A549 (cell line): ENCODE measurements at regions of chr17 and their contacts with region 1.

Region 1: DNA sequence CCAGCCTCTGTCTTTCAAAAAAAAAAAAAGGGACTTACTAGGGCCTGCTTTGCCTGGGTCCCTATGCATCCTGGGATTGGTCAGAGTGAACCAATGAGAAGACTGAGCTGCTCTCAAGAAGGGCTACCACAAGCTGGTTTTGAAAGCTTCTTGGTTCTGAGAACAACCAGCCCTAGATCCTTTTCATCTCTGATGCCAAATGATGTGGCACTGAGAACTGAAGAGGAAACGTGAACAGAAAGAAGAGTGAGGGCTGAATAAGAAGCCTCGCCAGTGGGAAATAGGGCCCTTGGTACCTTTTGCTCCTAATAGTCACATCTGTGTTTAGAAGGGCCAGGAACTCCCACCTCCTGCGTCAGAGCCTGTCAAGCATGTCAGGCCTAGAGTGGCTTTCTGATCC is 10.7 kb downstream of the TACO1 start:
- DNase-seq: no peak
- ATAC-seq: peak in 1 of 2 experiments; percentile 29; a peak in 1 of 6 replicates
- H3K4me3 ChIP-seq: no peak overlapping the region
- H3K27ac ChIP-seq: no peak overlapping the region
- H3K4me1 ChIP-seq: no peaks in the 10 kb centered on the region
- CTCF ChIP-seq: no peak
- EP300 ChIP-seq: no peak
- POLR2A ChIP-seq: no peak
- RAD21 ChIP-seq: no peak

Region 2: DNA sequence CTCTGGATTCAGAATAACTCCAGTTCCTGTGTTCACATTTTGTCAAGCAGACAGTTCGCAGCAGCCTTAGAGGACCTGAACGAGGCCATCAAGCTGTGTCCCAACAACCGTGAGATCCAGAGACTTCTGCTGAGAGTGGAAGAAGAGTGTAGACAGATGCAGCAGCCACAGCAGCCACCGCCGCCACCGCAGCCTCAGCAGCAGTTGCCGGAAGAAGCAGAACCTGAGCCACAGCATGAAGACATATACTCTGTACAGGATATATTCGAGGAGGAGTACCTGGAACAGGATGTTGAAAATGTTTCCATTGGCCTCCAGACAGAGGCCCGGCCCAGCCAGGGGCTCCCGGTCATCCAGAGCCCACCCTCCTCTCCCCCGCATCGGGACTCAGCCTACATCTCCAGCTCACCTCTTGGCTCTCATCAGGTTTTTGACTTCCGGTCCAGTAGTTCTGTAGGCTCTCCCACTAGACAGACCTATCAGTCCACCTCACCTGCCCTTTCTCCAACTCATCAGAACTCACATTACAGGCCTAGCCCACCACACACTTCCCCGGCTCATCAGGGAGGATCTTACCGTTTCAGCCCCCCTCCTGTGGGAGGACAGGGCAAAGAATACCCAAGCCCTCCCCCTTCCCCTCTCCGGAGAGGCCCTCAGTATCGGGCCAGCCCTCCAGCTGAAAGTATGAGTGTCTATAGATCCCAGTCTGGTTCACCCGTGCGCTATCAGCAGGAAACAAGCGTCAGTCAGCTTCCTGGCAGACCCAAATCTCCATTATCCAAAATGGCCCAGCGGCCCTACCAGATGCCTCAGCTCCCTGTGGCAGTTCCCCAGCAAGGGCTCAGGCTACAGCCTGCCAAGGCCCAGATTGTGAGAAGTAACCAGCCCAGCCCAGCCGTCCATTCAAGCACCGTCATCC is 191.1 kb before region 1 on chr17:
- CTCF ChIA-PET with region 1: interaction called, 336 read pairs
- POLR2A ChIA-PET with region 1: interaction called, 4 read pairs
- DNase-seq: no peak
- ATAC-seq: no peak
- H3K4me3 ChIP-seq: no peak overlapping the region
- H3K27ac ChIP-seq: no peak overlapping the region
- H3K4me1 ChIP-seq: no peaks in the 10 kb centered on the region
- CTCF ChIP-seq: no peak
- EP300 ChIP-seq: no peak
- POLR2A ChIP-seq: no peak
- RAD21 ChIP-seq: no peak

Region 3: DNA sequence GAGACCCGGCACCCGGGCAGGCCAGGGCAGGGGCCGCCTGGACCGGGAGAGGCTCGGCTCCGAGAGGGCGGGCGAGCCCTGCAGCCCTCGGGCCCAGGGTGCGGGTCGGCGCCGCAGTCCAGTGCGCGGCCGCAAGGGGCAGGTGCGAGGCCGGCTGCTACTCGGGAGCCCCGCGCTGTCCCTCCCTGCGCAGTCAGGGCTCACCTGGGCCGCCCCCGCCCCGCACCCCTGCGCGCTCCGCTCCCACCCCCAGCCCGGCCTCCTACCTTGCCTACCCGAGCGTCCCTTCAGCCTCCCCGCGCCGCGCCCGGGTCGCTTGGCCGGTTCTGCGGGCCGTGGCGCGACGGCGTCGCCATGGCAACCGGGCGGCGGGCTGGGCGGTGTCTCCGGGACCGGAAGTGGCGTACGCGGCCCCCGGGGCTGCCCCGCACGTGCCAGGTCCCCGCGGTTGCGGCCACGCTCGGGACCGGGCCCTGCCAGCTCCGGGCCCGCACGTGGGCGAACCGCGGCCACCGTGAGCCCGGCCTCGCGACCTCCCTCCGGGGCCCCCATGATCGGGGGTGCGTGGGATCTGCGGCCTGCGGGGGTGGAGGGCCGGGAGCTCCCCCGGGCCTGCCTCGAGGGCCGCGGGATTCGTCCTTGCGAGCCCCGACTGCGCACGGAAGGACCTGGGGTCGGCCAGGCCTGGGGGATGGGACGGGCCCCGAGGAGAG is 165.2 kb before region 1 on chr17 and contains the start of gene CYB561:
- CTCF ChIA-PET with region 1: interaction called, 18 read pairs
- POLR2A ChIA-PET with region 1: interaction called, 4 read pairs
- DNase-seq: peak; percentile 81 to 92
- ATAC-seq: peak; percentile 88 to 94
- H3K4me3 ChIP-seq: peak within 1 kb of the TSS; percentile 69
- H3K27ac ChIP-seq: peak within 1 kb of the TSS; percentile 94 to 98
- H3K4me1 ChIP-seq: peaks cover 15% of the 10 kb centered on the region
- CTCF ChIP-seq: peak; percentile 61
- EP300 ChIP-seq: no peak
- POLR2A ChIP-seq: peak; percentile 47
- RAD21 ChIP-seq: peak in 1 of 2 experiments; percentile 44; a peak in 3 of 5 replicates
- polyA plus RNA-seq, gene CYB561: 16.6 and 19.7 TPM in 2 replicates

Region 4: GRCh38 chr17:63478791-63479494 is 132.4 kb before region 1 on chr17:
- CTCF ChIA-PET with region 1: interaction called, 18 read pairs
- POLR2A ChIA-PET with region 1: no interaction called
- DNase-seq: peak; percentile 92 to 99
- ATAC-seq: peak; percentile 84 to 95
- H3K4me3 ChIP-seq: no peak overlapping the region
- H3K27ac ChIP-seq: peak overlapping the region in 1 of 2 experiments; percentile 57; a peak in 3 of 6 replicates
- H3K4me1 ChIP-seq: peaks cover 13% of the 10 kb centered on the region
- CTCF ChIP-seq: peak; percentile 90
- EP300 ChIP-seq: no peak
- POLR2A ChIP-seq: no peak
- RAD21 ChIP-seq: peak; percentile 84 to 88

Region 5: DNA sequence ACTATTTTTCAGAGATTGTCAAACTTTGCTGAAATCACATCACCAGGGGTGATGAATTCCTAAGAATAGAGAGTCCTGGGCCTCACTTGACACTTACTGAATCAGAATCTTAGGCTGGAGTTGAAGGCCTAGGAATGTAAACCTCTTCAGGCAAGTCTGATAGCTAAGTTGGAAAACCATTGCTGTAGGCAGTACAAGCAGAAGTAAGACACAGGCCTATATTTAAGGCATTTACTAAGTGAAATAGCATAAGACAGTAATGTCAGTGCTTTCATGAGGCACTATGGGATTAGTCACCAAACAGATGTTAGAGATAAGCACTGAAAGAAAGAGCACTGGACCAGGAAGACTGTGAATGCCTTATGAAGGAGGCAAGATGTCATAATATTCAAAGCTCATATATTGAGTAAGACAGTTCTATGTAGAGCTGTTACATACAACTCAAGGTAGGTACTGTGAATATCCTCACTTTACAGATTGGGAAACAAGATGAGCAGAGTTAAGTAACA is 39.5 kb before region 1 on chr17:
- CTCF ChIA-PET with region 1: interaction called, 16 read pairs
- POLR2A ChIA-PET with region 1: no interaction called
- DNase-seq: peak in 1 of 2 experiments; percentile 21
- ATAC-seq: peak; percentile 27 to 51; a peak in 2 of 6 replicates
- H3K4me3 ChIP-seq: no peak overlapping the region
- H3K27ac ChIP-seq: no peak overlapping the region
- H3K4me1 ChIP-seq: peaks cover 8% of the 10 kb centered on the region; the same call in 1 of the 3 replicates
- CTCF ChIP-seq: no peak
- EP300 ChIP-seq: no peak
- POLR2A ChIP-seq: no peak
- RAD21 ChIP-seq: no peak

Region 6: DNA sequence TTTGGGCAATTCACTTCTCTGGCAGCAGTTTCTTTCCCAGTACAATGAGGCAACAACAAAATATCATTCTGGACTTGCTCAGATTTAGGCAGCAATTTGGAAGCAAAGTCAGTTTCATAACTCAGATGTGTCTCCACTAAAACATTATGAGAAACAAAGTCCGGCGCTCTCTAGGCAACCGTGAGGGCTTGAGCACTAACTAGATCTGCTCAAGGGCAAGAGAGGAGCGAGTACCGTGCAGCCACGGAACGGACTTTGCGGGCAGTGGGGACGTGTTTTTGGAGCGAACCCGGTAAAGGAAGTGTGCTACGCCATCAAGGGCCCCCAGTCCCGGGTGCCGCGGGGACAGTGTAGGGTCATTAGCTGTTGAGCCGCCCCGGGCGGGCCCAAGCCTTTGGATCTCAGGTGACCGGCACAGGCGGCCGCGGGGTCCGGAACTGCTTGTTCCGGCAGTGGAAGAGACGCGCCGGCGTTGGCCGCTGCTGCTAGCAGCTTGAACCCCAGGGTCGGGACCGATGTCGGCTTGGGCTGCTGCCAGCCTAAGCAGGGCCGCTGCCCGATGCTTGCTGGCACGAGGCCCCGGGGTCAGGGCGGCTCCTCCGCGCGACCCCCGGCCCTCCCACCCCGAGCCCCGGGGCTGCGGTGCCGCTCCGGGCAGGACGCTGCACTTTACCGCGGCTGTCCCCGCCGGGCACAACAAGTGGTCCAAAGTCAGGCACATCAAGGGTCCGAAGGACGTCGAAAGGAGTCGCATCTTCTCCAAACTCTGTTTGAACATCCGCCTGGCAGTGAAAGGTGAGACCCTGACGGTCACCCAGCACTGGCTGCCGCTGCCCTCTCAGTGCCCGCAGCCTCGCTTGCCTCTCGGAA is 10.6 kb before region 1 on chr17 and contains the start of gene TACO1:
- CTCF ChIA-PET with region 1: interaction called, 80 read pairs
- POLR2A ChIA-PET with region 1: interaction called, 4 read pairs
- DNase-seq: peak; percentile 90 to 91
- ATAC-seq: peak; percentile 94 to 95
- H3K4me3 ChIP-seq: peak within 1 kb of the TSS; percentile 88
- H3K27ac ChIP-seq: peak within 1 kb of the TSS; percentile 90 to 95
- H3K4me1 ChIP-seq: peaks cover 13% of the 10 kb centered on the region
- CTCF ChIP-seq: no peak
- EP300 ChIP-seq: no peak
- POLR2A ChIP-seq: peak; percentile 75
- RAD21 ChIP-seq: 0 out of 5 replicates have a peak, but pooled peaks of 1 of the 2 experiments have one; percentile 17
- polyA plus RNA-seq, gene TACO1: 38.0 and 49.9 TPM in 2 replicates

Region 7: DNA sequence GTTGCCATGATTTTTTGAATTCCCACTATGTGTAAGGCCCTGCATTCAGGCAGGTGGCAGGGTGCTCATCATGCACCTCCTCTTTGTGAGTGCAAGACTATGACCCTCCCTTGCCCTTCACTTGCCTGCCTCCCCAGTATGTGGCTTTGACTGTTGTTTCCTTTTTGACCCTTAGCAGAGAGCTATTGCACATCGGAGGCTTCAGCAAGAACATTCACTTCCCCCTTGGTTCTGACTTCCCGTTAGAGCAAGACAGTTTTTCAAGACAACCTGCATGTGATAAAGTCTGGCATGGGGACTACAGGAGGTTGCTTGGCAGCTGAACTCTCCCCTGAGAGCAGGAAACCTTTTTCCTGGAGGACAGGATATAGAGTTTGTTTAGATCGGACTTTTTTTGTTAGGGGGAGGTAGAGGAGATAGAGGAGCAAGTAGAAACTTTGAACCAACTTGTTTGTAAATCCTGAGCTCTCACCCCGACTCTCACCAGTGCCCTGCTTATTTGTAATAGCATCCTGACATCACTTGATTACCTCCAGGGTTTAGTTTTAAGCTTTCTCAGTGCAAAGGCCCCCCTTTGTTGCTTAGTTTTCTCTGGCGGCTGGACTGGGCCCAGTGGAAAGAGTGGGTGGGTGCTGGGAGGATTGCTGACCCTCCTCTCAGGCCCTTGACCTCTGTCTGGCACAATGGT is 54.3 kb after region 1 on chr17:
- CTCF ChIA-PET with region 1: interaction called, 12 read pairs
- POLR2A ChIA-PET with region 1: no interaction called
- DNase-seq: no peak
- ATAC-seq: no peak
- H3K4me3 ChIP-seq: no peak overlapping the region
- H3K27ac ChIP-seq: no peak overlapping the region
- H3K4me1 ChIP-seq: no peaks in the 10 kb centered on the region
- CTCF ChIP-seq: no peak
- EP300 ChIP-seq: no peak
- POLR2A ChIP-seq: no peak
- RAD21 ChIP-seq: no peak